GM10248 (cell line): ENCODE measurements at regions of chr12 and their contacts with region 1.

Region 1: GRCh38 chr12:53213348-53213747 is 6.3 kb upstream of the ITGB7 start:
- DNase-seq: peak; percentile 81
- CTCF ChIP-seq: peak; percentile 91

Region 2: GRCh38 chr12:53115112-53115890 is 98.0 kb before region 1 on chr12:
- CTCF ChIA-PET with region 1: no interaction called
- POLR2A ChIA-PET with region 1: no interaction called
- DNase-seq: peak; percentile 30
- CTCF ChIP-seq: no peak

Region 3: DNA sequence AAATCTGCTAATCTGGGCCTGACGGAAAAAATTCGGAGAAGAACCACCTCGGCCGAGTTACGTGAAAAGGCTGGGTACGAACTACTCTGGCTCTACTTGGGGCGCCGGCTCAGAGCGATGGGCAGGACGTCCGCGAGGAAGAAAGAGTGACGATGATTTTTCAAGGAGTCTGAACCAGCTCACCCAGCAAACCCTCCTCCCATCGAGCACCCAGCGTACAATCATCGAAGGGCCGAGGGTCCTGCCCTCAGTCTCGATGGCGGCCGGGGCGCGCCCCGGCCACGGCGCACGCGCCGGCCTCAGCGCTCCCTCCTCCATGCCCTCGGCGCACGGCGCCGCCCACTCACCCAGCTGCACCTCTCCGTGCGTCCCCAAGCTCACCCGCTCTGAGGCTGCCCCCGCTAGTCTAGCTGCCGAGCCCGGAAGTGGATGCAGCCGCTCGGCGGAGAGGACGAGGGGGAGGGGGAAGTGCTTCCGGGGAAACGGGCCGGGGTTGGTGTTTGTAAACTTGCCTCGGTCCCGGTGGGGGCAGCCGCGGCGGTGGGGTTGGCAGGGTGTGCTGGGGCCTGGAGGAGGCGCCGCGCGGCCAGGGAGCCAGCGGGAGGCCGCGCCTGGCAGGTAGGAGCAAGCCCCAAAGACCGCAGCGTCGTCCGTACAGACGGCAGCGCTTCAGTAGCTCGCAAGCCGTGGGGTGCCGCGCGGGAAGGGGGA is 33.0 kb before region 1 on chr12 and contains the starts of genes CSAD and ZNF740:
- CTCF ChIA-PET with region 1: interaction called, 10 read pairs
- POLR2A ChIA-PET with region 1: no interaction called
- DNase-seq: peak; percentile 99
- CTCF ChIP-seq: no peak

Region 4: DNA sequence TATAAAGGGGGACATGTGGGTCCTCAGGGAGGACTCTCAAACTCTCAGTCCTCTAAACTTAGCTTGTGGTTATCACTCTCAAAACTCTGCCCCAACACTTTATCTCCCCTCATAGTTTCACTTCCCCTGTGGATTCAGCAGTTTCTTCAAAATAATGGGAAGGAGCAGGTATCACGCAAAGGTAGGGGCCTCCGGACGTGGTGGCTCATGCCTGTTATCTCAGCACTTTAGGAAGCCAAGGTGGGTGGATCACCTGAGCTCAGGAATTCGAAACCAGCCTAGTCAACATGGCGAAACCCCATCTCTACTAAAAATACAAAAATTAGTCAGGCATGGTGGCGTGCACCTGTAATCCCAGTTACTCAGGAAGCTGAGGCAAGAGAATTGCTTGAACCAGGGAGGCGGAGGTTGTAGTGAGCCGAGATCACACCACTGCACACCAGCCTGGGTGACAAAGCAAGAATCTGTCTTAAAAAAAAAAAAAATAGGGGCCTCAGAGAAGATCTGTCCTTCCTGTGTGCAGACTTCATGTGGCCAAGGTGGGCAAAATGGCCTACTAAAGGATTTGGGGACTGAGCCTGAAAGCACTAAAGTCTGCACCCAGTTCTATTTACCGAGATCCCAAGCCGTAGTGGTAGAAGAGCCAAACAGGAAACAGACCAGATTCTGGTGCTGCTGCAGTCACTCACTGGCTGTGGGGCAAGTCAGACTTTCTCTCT is 12.7 kb before region 1 on chr12:
- CTCF ChIA-PET with region 1: interaction called, 61 read pairs
- POLR2A ChIA-PET with region 1: no interaction called
- DNase-seq: peak; percentile 52
- CTCF ChIP-seq: no peak

Region 5: GRCh38 chr12:53236443-53237111 is 23.2 kb after region 1 on chr12:
- CTCF ChIA-PET with region 1: interaction called, 40 read pairs
- POLR2A ChIA-PET with region 1: no interaction called
- DNase-seq: no peak
- CTCF ChIP-seq: no peak

Region 6: DNA sequence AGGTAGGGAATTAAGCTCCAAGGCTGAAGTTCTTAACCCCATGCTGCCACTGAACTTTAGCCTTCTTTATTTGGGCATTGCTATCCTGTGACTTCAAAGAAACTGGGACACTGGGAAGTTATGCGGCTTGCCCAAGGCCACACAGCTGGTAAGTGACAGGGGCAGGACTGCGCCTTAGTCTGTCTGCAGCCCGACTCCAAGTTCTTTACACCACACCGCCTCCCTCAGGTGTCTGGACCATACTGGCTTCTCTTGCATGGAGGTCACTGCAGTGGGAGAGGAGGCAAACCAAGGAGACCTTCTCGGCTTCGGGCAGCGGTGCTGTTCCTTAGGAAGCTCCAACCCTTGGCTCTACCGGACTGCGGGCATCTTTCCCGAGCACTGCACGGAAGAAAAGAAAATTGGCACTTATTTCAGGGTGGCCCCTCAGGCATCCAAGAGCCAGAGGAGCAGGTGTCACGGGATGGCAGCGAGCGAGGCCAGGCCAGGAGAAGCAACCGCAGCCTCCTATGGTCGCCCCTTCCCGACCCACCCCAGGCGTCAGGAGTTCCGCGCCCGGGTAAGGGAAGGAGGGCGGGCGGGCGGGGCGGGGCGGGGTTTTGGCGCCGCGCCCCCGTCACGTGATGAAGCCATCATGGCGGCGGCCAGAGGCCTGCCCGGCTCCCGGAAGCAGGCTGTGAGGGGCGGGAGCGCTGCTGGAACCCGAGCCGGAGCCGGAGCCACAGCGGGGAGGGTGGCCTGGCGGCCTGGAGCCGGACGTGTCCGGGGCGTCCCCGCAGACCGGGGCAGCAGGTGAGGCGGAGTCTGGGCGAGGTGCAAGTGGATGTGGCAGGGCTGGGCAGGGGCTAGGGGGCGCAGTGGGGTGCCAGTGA is 38.4 kb after region 1 on chr12:
- CTCF ChIA-PET with region 1: interaction called, 30 read pairs
- POLR2A ChIA-PET with region 1: no interaction called
- DNase-seq: peak; percentile 93
- CTCF ChIP-seq: peak; percentile 67

Region 7: DNA sequence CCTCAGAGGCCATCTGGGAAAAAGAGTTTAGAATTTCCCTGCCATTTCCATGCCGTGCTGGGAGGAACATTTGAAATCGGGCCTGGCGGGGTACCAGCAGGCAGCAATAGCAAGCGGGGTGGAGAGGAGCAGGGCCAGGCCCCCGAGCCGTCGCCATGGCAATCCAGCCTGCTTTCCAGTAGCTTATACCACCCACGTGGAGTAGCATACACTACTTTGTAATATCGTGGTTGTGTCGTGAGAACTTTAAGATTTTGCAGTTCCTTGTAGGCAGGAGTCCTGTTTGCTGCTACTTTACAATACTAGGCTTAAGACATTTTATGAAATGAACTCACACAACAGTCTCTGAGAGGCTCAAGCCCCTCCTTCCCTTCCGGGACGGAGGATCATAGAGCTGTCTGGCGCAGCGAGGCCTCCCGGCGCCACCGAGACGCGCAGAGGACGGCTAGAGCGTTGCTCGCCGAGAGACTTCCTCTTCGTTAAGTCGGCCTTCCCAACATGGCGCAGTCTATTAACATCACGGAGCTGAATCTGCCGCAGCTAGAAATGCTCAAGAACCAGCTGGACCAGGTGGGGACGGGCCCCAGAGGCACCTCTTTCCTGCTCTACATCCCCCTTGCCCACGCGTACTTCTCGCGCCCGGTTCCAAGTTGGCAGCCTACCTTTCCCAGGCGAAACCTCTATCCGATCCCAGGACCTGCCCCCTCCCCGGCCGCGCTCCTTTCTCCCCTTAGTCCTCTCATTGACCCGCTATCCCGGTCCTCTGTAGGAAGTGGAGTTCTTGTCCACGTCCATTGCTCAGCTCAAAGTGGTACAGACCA is 81.9 kb after region 1 on chr12 and contains the start of gene PFDN5:
- CTCF ChIA-PET with region 1: interaction called, 383 read pairs
- POLR2A ChIA-PET with region 1: interaction called, 3 read pairs
- DNase-seq: peak; percentile 92
- CTCF ChIP-seq: no peak